ENCODE measurements at regions of chr10 and their contacts with region 1.

Region 1: DNA sequence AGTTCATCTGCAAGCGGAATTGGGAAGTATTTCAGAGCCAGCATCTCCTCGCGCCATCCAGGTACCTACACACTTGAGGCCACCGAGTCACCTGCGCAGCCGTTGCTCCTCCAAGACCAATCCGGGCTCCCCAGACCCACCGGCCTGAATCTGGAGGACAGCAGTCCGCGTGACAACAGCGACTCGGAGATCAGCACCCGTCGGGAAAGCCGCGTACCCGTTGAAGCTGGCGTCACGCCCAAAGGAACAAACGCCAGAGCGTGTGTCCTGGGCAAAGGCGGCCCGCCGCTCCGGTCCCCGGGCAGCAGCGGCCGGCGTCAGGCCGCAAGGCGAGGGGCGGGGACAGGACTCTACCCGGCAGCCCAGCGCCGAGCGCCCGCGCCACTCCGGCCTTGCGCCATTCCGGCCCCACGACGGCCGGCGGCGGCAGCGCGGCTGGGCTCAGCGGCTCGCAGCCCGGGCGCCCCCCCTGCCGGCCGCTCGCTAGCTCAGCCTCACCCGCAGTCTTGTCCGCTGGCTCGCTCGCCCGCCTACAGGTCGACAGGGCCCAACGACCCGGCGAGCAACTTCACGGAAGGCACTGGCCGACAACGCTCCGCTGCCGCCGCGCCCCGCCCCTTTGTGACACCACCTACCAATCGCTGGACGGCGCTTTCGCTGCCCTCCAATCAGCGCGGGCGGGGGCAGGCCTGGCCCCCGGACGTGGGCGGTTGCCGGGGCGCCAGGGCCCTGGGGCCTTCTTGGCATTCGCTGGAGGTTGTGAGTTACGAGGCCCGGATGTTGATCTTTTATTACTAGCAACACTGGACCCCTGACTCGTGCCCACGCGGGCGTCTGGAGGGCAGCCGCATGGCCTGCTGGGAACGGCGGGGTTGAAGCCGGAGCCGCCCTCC is at the start of gene ZFAND4:
- DNase-seq: peak; percentile 96
- H3K4me3 ChIP-seq: peak within 1 kb of the TSS; percentile 63
- H3K27ac ChIP-seq: peak within 1 kb of the TSS; percentile 88
- H3K4me1 ChIP-seq: peaks cover 4% of the 10 kb centered on the region
- H3K27me3 ChIP-seq: no peaks in the 10 kb centered on the region
- CTCF ChIP-seq: peak; percentile 49
- total RNA-seq, gene ZFAND4: 11.3 to 15.9 TPM

Region 2: GRCh38 chr10:45464958-45465567 is 207.4 kb before region 1 on chr10:
- intact Hi-C with region 1: loop called (anchors 2 kb)
- DNase-seq: peak; percentile 83
- H3K4me3 ChIP-seq: no peak overlapping the region
- H3K27ac ChIP-seq: no peak overlapping the region
- H3K4me1 ChIP-seq: no peaks in the 10 kb centered on the region
- H3K27me3 ChIP-seq: no peaks in the 10 kb centered on the region
- CTCF ChIP-seq: peak; percentile 91